ENCODE measurements at regions of chr15 and their contacts with region 1.

Region 1: DNA sequence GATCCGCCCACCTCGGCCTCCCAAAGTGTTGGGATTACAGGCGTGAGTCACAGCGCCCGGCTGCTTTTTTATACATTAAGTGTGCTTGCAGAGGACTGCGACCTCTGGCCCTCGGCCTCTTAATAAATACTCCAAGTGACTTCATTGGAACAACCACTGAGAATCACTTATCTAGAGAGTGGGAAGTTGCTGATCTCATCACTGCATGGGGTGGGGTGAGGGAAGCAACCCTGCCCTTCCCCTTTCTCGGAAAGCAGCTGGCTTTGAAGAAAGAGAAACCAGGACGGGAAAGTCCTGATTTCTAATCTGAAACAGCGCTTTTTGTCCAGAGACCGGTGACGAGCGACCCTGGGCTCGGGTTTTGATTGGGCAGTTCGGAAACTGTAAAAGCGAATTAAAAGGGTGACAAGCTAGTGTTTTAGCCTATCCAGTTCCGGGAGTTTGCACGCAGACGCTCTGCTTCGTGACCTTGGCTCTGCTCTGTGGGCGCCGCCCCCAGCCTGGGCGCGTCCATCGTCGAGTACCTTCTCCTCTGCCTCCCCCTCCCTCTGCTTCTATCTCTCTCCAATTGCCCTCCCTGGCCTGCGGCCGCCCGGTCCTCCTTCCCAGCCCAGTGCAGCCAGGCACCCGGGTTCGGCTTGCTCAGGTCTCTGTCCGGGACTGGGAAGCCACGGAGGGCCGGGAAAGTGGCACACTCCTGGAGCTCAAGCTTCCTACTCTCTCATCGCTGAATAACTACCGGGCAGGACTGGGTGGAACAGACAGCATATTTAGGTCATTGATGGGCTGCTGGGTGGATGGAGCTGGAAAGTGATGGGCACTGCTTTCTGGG is 7.5 kb upstream of the TRIM69 start:
- DNase-seq: peak; percentile 97
- H3K4me3 Mint-ChIP-seq: peak overlapping the region; percentile 97
- H3K27ac Mint-ChIP-seq: peak overlapping the region; percentile 99
- H3K4me1 Mint-ChIP-seq: peaks cover 69% of the 10 kb centered on the region
- H3K27me3 Mint-ChIP-seq: no peaks in the 10 kb centered on the region

Region 2: DNA sequence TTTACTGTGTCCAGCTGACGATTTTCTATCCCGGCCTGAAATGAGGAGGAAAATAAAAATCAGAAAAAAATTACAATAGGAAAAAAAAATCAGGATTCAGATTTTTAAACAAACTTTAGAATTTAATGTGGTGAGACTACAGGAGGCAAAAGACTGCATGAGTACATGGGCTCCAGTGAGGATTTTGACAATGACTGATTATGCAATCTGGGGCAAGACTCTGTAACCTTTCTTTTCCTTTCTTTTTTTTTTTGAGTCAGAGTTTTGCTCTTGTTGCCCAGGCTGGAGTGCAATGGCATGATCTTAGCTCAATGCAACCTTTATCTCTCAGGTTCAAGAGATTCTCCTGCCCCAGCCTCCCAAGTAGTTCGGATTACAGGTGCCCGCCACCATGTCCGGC is 95.2 kb before region 1 on chr15:
- CTCF ChIA-PET with region 1: interaction called, 3 read pairs
- intact Hi-C with region 1: loop called (anchors 1 kb)
- DNase-seq: peak; percentile 34
- H3K4me3 Mint-ChIP-seq: peak overlapping the region; percentile 65
- H3K27ac Mint-ChIP-seq: peak overlapping the region; percentile 98
- H3K4me1 Mint-ChIP-seq: peaks cover 34% of the 10 kb centered on the region
- H3K27me3 Mint-ChIP-seq: no peaks in the 10 kb centered on the region

Region 3: DNA sequence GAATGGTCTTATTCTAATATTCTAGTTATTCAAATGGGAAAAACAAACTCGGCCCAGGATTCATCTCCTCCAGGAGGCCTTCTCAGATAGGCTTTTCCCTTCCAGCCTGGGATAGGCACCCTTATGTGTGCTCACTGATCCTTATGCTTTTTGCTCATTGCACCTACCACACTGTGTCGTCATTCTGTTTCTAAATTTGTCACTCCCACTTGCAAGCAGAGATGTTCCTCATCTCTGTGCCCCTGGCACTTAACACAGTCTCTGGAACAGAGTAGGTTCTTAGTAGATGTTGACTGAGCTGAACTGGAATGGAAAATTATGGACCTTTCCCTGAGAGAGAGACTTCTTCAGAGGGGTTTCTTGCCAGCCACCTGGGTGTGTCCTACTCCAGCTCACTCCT is 46.6 kb before region 1 on chr15:
- CTCF ChIA-PET with region 1: no interaction called
- intact Hi-C with region 1: loop called (anchors 1 kb)
- DNase-seq: no peak
- H3K4me3 Mint-ChIP-seq: peak overlapping the region; percentile 37
- H3K27ac Mint-ChIP-seq: peak overlapping the region; percentile 87
- H3K4me1 Mint-ChIP-seq: peaks cover 80% of the 10 kb centered on the region
- H3K27me3 Mint-ChIP-seq: no peaks in the 10 kb centered on the region

Region 4: GRCh38 chr15:44788748-44789147 is 60.0 kb after region 1 on chr15:
- CTCF ChIA-PET with region 1: no interaction called
- intact Hi-C with region 1: loop called (anchors 1 kb)
- DNase-seq: peak; percentile 73
- H3K4me3 Mint-ChIP-seq: no peak overlapping the region
- H3K27ac Mint-ChIP-seq: peak overlapping the region; percentile 81
- H3K4me1 Mint-ChIP-seq: peaks cover 41% of the 10 kb centered on the region
- H3K27me3 Mint-ChIP-seq: no peaks in the 10 kb centered on the region

Region 5: DNA sequence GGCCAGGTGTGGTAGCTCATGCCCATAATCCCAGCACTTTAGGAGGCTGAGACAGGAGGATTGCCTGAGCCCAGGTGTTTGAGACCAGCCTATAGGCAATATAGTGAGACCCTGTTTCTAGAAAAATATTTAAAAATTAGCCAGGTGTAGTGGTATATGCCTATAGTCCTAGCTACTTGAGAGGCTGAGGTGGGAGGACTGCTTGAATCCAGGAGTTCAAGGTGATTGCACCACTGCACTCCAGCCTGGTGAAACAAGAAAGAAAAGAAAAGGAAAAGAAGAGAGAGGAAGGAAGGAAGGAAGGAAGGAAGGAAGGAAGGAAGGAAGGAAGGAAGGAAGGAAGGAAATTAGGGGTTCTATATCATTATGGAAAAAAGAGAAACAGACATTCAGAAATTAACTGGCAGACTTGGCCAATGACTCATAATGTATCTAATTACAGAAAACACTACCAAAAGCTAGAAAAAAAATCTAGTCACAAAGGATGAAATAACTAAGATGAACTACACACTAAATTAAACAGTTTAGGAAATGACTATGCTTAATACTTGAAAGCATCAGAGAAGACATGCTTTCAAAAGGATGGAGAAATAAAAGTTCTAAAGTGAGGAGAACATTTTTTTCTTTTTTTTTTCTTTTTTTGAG is 182.3 kb after region 1 on chr15:
- CTCF ChIA-PET with region 1: no interaction called
- intact Hi-C with region 1: no loop called
- DNase-seq: no peak
- H3K4me3 Mint-ChIP-seq: no peak overlapping the region
- H3K27ac Mint-ChIP-seq: no peak overlapping the region
- H3K4me1 Mint-ChIP-seq: peaks cover 6% of the 10 kb centered on the region
- H3K27me3 Mint-ChIP-seq: peaks cover 2% of the 10 kb centered on the region

Region 6: DNA sequence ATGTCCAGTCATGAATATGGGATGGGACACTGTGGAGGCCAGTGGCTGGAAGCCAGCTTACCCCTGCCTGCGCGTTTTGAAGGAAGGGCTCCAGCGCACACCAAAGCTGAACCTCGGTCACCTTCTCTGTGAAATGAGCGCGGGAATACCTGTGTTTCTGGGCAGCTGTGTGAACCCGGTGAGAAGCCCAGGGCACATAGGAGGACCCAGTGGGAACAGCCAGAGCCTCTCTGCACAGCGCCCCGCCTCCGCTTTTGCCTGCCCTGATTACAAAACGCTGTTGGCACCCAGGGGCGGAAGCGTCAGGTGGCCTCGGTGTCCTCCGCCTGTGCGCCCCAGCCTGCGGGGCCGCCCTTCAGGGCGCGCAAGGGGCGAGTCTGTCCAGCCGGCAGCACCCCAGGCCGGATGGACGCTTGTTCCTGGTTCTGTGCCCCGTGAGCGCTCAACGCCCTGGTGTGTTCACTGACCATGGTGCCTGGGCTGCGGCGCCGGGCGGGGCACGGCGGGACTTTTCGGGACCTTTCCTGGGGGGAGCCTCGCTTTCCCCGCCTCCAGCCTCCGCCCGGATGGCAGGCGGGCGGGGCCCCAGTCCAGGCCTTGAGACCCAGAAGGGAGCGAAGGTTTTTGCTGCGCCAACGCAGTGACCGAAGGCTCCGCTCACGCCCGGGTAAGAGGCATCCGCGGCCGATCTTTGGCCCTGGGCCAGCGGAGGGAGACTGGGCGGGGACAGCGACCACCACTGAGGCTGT is 905.8 kb after region 1 on chr15 and contains the start of gene SQOR:
- CTCF ChIA-PET with region 1: no interaction called
- intact Hi-C with region 1: loop called (anchors 5 kb)
- DNase-seq: peak; percentile 76
- H3K4me3 Mint-ChIP-seq: peak within 1 kb of the TSS; percentile 99
- H3K27ac Mint-ChIP-seq: peak within 1 kb of the TSS; percentile 86
- H3K4me1 Mint-ChIP-seq: peaks cover 43% of the 10 kb centered on the region
- H3K27me3 Mint-ChIP-seq: no peaks in the 10 kb centered on the region
- total RNA-seq, gene SQOR: 54.3 to 56.4 TPM